Heart right ventricle (tissue), 16 donors: ENCODE measurements at regions of chr11 and their contacts with region 1.

Region 1: GRCh38 chr11:62652161-62653006 is 718 bp downstream of the INTS5 start:
- DNase-seq: no peak
- ATAC-seq: peak in 2 of 8 donors; percentile 3 to 9
- H3K4me3 ChIP-seq: peak overlapping the region; percentile 70 to 100 (median 90)
- H3K27ac ChIP-seq: peak overlapping the region; percentile 80 to 98 (median 93)
- H3K4me1 ChIP-seq: peaks cover 0 to 21% (median 16%) of the 10 kb centered on the region in 9 donors
- H3K27me3 ChIP-seq: no peaks in the 10 kb centered on the region
- CTCF ChIP-seq: no peak

Region 2: DNA sequence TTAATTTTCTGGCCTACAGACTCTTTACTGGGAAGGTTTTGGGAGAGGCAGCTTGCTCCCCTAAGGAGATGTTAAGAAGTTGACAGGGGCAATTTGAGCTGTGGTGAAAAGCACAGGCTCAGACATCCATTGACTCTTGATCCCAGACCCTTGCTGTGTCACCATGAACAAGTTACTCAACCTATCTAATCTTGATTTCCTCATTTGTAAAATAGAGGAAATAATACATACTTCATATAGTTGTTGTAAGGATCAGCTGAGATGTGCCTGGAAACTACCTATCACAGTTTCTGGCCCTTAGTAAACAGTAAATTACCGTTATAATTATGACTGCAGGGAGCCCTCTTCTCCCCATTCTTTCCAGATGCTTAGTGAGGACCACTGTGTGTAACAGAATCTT is 337.0 kb before region 1 on chr11:
- intact Hi-C with region 1: no loop called
- DNase-seq: no peak
- ATAC-seq: no peak
- H3K4me3 ChIP-seq: no peak overlapping the region
- H3K27ac ChIP-seq: no peak overlapping the region
- H3K4me1 ChIP-seq: peaks cover 0 to 11% (median 0%) of the 10 kb centered on the region in 9 donors
- H3K27me3 ChIP-seq: peaks cover 0 to 31% (median 8%) of the 10 kb centered on the region in 7 donors
- CTCF ChIP-seq: no peak

Region 3: GRCh38 chr11:62556108-62556871 is 96.1 kb before region 1 on chr11:
- intact Hi-C with region 1: no loop called
- DNase-seq: peak; percentile 84 to 88
- ATAC-seq: peak; percentile 58 to 73 (median 68)
- H3K4me3 ChIP-seq: peak overlapping the region in 3 of 10 donors; percentile 7 to 30 (median 13)
- H3K27ac ChIP-seq: peak overlapping the region; percentile 61 to 98 (median 92)
- H3K4me1 ChIP-seq: peaks cover 41 to 95% (median 80%) of the 10 kb centered on the region in 9 donors
- H3K27me3 ChIP-seq: no peaks in the 10 kb centered on the region
- CTCF ChIP-seq: no peak

Region 4: GRCh38 chr11:62612366-62613290 is 39.8 kb before region 1 on chr11 and contains the starts of genes EML3 and ROM1:
- intact Hi-C with region 1: loop called in 1 of 10 experiments (anchors 5 kb)
- DNase-seq: peak; percentile 92 to 93
- ATAC-seq: peak; percentile 87 to 94 (median 90)
- H3K4me3 ChIP-seq: peak within 1 kb of the TSS; percentile 65 to 93 (median 76)
- H3K27ac ChIP-seq: peak within 1 kb of the TSS; percentile 91 to 98 (median 96)
- H3K4me1 ChIP-seq: peaks cover 9 to 42% (median 27%) of the 10 kb centered on the region in 9 donors
- H3K27me3 ChIP-seq: no peaks in the 10 kb centered on the region
- CTCF ChIP-seq: peak; percentile 81 to 98 (median 92)
- total RNA-seq, gene EML3: 7.7 to 27.2 (median 15.2) TPM
- total RNA-seq, gene ROM1: 0.81 to 4.4 (median 1.8) TPM

Region 5: GRCh38 chr11:62958547-62959421 is 306.4 kb after region 1 on chr11:
- intact Hi-C with region 1: no loop called
- DNase-seq: peak in 1 of 2 donors; percentile 42
- ATAC-seq: peak in 5 of 8 donors; percentile 42 to 73 (median 55)
- H3K4me3 ChIP-seq: no peak overlapping the region
- H3K27ac ChIP-seq: peak overlapping the region in 5 of 10 donors; percentile 20 to 52 (median 36)
- H3K4me1 ChIP-seq: peaks cover 0 to 16% (median 8%) of the 10 kb centered on the region in 9 donors
- H3K27me3 ChIP-seq: peaks cover 0 to 4% (median 0%) of the 10 kb centered on the region in 7 donors
- CTCF ChIP-seq: no peak

Region 6: DNA sequence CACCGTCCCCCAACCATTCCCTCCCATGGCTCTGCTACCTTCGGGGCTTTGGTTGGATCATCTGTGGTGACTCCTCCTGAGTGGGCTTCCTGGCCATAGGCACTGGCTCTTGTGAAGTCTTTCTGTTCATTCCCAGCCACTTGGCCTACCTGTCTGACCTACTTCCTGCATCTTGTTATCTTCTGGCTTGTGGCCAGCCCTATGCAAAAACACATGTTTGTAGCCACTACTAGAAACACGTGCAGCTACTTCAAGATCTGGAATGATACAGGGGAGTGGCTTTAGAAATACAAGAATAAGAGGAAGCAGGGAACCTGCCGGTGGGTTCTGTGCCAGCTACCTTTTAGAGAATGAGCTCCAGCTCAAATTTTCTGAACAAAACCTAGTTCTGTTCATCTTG is 1243.7 kb after region 1 on chr11:
- intact Hi-C with region 1: loop called in 1 of 10 experiments (anchors 5 kb)
- DNase-seq: no peak
- ATAC-seq: no peak
- H3K4me3 ChIP-seq: no peak overlapping the region
- H3K27ac ChIP-seq: no peak overlapping the region
- H3K4me1 ChIP-seq: peaks cover 0 to 34% (median 16%) of the 10 kb centered on the region in 9 donors
- H3K27me3 ChIP-seq: no peaks in the 10 kb centered on the region
- CTCF ChIP-seq: no peak